ENCODE measurements at regions of chr3 and their contacts with region 1.

Region 1: GRCh38 chr3:127652231-127652995 is 20.3 kb upstream of the ABTB1 start:
- DNase-seq: peak; percentile 55 to 75
- H3K4me3 ChIP-seq: no peak overlapping the region
- H3K27ac ChIP-seq: no peak overlapping the region
- H3K4me1 ChIP-seq: peaks cover 0 to 26% (median 7%) of the 10 kb centered on the region in 4 donors
- H3K27me3 ChIP-seq: no peaks in the 10 kb centered on the region
- CTCF ChIP-seq: peak; percentile 88 to 91

Region 2: DNA sequence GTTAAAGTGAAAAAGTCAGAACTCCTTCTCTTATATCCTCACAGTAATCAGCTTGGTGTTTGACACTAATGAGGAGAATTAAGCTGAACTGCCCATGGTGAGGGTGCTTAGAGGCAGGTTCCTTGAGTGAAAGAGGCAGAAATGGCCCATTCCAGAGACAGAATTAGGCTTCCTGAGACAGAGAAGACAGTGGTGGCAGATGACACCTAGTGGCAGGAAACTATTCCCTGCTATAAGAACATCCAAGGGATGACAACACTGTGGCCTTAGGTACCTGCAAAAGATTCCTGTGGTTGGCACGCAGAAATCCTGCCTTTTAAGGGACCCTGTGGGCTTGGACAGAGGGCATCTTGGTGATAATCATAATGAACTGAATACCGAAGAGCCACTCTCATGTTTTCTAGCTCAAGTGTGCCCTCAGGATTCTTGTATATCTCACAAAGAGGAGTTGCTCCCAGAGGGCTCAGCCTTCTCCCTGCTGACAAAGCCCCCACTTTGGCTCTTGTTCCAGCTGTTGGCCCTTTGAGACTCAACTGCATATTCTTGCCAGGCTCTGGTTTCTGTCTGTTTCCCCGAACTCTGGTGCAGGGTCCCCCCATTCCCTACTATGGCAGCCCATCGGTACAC is 318.7 kb after region 1 on chr3:
- intact Hi-C with region 1: loop called (anchors 10 kb)
- DNase-seq: peak in 1 of 2 donors; percentile 31
- H3K4me3 ChIP-seq: no peak overlapping the region
- H3K27ac ChIP-seq: no peak overlapping the region
- H3K4me1 ChIP-seq: no peaks in the 10 kb centered on the region
- H3K27me3 ChIP-seq: no peaks in the 10 kb centered on the region
- CTCF ChIP-seq: peak; percentile 66 to 70